Esophagus muscularis mucosa (tissue), 4 donors: ENCODE measurements at regions of chr6 and their contacts with region 1.

Region 1: DNA sequence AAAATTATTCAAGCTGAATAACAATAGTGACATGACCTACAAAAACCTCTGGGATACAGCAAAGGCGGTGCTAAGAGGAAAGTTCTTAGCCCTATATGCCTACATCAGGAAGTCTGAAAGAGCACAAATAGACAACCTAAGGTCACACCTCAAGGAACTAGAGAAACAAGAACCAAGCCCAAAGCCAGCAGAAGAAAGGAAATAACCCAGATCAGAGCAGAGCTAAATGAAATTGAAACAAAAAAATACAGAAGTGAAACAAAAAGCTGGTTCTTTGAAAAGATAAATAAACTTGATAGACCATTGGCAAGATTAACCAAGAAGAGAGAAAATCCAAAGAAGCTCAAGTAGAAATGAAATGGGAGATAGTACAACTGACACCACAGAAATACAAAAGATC is 47.6 kb upstream of the NOTCH4 start:
- DNase-seq: no peak
- H3K4me3 ChIP-seq: no peak overlapping the region
- H3K27ac ChIP-seq: no peak overlapping the region
- H3K4me1 ChIP-seq: no peaks in the 10 kb centered on the region
- H3K27me3 ChIP-seq: peaks cover 0 to 3% (median 0%) of the 10 kb centered on the region in 4 donors
- CTCF ChIP-seq: no peak
- EP300 ChIP-seq: no peak
- POLR2A ChIP-seq: no peak

Region 2: GRCh38 chr6:31922942-31923341 is 348.5 kb before region 1 on chr6:
- intact Hi-C with region 1: loop called (anchors 10 kb)
- DNase-seq: no peak
- H3K4me3 ChIP-seq: no peak overlapping the region
- H3K27ac ChIP-seq: no peak overlapping the region
- H3K4me1 ChIP-seq: no peaks in the 10 kb centered on the region
- H3K27me3 ChIP-seq: no peaks in the 10 kb centered on the region
- CTCF ChIP-seq: no peak
- EP300 ChIP-seq: no peak
- POLR2A ChIP-seq: no peak

Region 3: GRCh38 chr6:32415511-32416019 is 144.1 kb after region 1 on chr6:
- intact Hi-C with region 1: no loop called
- DNase-seq: no peak
- H3K4me3 ChIP-seq: peak overlapping the region in 2 of 4 donors; percentile 6 to 29
- H3K27ac ChIP-seq: no peak overlapping the region
- H3K4me1 ChIP-seq: peaks cover 0 to 10% (median 7%) of the 10 kb centered on the region in 4 donors
- H3K27me3 ChIP-seq: peaks cover 0 to 65% (median 6%) of the 10 kb centered on the region in 4 donors
- CTCF ChIP-seq: peak in 2 of 3 experiments; percentile 97 to 99
- EP300 ChIP-seq: no peak
- POLR2A ChIP-seq: no peak